PC-9 (cell line): ENCODE measurements at regions of chr17 and their contacts with region 1.

Region 1: DNA sequence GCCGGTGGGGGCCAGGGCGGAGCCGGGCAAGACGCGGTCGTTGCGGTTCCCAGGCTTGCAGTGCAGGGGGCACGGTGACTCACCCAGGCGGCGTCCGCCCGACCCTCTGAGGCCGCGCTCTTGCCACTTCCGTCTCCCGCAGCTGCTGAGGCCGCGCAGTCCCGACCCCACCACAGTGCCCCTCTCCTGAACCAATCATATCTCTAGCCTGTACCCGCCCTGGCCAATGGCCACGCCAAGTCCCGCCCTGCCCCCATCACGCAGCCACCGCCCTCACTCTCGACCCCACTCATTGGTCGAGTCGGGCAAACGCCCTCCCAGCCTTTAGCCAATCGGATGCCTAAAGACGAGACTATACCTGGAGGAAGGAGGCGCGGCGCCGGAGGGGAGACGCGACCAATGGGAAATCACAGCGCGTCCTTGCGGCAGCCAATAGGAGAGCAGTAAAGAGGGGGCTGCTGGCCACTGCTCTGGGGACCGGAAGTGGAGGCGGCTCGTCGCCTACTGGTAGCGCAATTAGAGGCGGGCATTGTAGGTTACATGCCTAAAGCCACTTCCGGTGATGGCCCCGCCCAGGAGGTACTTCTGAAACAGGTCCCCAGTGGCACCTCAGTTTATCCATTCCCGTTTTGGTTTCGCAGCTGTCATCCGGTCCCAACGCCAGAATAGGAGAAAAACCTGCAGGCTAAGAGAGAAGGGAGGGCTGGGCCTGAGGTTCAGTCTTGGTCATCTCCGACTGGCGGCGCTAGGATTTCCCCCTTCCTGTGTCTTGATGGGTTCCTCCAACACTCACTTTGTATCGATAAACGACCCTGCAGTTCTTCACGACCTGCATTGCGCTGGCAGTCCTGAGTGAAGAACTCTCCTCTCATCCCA is 3.5 kb upstream of the MTMR4 start:
- DNase-seq: peak; percentile 99 to 100
- H3K4me3 ChIP-seq: peak overlapping the region; percentile 80
- H3K27ac ChIP-seq: peak overlapping the region; percentile 84
- H3K4me1 ChIP-seq: peaks cover 23% of the 10 kb centered on the region
- H3K27me3 ChIP-seq: no peaks in the 10 kb centered on the region
- CTCF ChIP-seq: no peak

Region 2: GRCh38 chr17:58463821-58464220 is 54.2 kb before region 1 on chr17:
- CTCF ChIA-PET with region 1: no interaction called
- POLR2A ChIA-PET with region 1: no interaction called
- intact Hi-C with region 1: no loop called
- DNase-seq: no peak
- H3K4me3 ChIP-seq: no peak overlapping the region
- H3K27ac ChIP-seq: no peak overlapping the region
- H3K4me1 ChIP-seq: no peaks in the 10 kb centered on the region
- H3K27me3 ChIP-seq: peaks cover 20% of the 10 kb centered on the region
- CTCF ChIP-seq: no peak

Region 3: GRCh38 chr17:58587702-58588254 is 69.8 kb after region 1 on chr17:
- CTCF ChIA-PET with region 1: interaction called, 18 read pairs
- POLR2A ChIA-PET with region 1: no interaction called
- intact Hi-C with region 1: loop called (anchors 2 kb)
- DNase-seq: peak; percentile 41 to 55
- H3K4me3 ChIP-seq: no peak overlapping the region
- H3K27ac ChIP-seq: no peak overlapping the region
- H3K4me1 ChIP-seq: no peaks in the 10 kb centered on the region
- H3K27me3 ChIP-seq: no peaks in the 10 kb centered on the region
- CTCF ChIP-seq: peak; percentile 98

Region 4: DNA sequence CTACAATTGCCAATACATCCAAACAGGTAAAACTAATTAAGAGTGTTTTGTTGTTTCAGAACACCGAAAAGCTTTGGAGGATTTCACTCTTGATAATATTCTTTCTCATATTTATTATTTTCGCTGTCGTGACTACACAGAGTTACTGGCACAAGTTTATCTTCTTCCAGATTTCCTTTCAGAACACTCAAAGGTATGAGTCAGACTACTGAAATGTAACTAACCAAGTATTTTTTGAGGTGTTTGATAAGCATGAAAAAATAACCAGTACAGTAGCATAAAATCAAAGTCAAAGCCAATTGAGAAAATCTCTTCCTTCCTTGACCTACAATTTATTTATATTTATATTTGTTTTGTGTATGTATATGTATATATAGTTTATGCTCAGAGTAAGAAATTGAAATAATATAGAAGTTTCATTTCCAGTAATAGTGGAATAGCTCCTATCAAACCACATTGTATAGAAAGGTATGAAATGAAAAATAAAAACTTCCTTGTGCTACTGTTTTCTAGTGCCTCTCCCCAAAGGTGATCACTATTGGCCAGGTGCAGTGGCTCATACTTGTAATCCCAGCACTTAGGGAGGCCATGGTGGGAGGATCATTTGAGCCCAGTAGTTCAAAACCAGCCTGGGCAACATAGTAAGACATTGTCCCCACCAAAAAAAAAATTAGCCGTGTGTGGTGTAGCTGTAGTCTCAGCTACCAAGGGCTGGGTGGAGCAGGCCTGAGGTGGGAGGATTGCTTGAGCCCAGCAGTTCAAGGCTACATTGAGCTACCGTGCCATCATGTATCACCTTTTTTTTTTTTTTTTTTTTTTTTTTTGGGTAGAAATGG is 185.4 kb after region 1 on chr17:
- CTCF ChIA-PET with region 1: interaction called, 5 read pairs
- POLR2A ChIA-PET with region 1: no interaction called
- intact Hi-C with region 1: loop called (anchors 2 kb)
- DNase-seq: peak in 1 of 2 experiments; percentile 84
- H3K4me3 ChIP-seq: no peak overlapping the region
- H3K27ac ChIP-seq: peak overlapping the region; percentile 59
- H3K4me1 ChIP-seq: peaks cover 26% of the 10 kb centered on the region
- H3K27me3 ChIP-seq: no peaks in the 10 kb centered on the region
- CTCF ChIP-seq: no peak

Region 5: DNA sequence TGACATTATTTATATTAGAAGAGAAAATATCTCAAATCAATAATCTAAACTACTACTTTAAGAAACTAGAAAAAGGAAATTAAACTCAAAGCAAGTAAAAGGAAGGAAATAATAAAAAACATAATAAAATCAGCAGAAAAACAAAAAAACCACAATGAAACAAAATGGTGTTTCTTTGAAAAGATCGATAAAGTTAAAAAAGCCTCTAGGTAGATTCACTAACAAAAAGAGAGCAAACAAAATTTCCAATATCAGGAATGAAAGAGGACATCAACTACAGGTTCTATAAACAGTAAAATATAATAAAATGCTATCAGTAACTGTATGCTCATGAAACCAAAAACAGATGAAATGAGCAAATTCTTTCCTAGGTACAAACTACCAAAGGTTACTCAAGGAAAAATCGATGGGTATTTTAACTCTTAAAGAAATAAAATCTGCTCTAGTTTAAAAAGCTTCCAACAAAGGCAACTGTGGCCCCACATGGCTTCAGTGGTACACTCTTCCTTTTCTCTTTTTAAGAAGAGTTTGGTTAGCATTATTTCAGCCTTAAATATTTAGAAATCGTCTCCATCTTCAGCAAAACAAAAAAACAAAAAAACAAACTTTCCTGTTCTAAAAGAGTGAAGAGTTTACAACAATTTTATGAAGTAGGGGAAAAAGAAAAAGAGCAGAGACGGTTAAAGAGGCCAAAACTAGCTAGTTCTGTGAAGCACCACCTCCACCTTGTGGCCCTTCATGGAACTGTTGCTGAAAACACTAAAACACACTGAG is 486.6 kb after region 1 on chr17:
- CTCF ChIA-PET with region 1: interaction called, 7 read pairs
- POLR2A ChIA-PET with region 1: no interaction called
- intact Hi-C with region 1: loop called (anchors 1 kb)
- DNase-seq: peak in 1 of 2 experiments; percentile 43
- H3K4me3 ChIP-seq: no peak overlapping the region
- H3K27ac ChIP-seq: no peak overlapping the region
- H3K4me1 ChIP-seq: no peaks in the 10 kb centered on the region
- H3K27me3 ChIP-seq: no peaks in the 10 kb centered on the region
- CTCF ChIP-seq: peak; percentile 97

Region 6: GRCh38 chr17:59106463-59107305 is 588.7 kb after region 1 on chr17 and contains the start of gene TRIM37:
- CTCF ChIA-PET with region 1: no interaction called
- POLR2A ChIA-PET with region 1: no interaction called
- intact Hi-C with region 1: loop called (anchors 2 kb)
- DNase-seq: peak; percentile 98 to 99
- H3K4me3 ChIP-seq: peak within 1 kb of the TSS; percentile 73
- H3K27ac ChIP-seq: peak within 1 kb of the TSS; percentile 73
- H3K4me1 ChIP-seq: peaks cover 26% of the 10 kb centered on the region
- H3K27me3 ChIP-seq: no peaks in the 10 kb centered on the region
- CTCF ChIP-seq: no peak
- total RNA-seq, gene TRIM37: 21.6 and 24.6 TPM in 2 replicates